ENCODE measurements at regions of chr4 and their contacts with region 1.

Region 1: GRCh38 chr4:110510955-110511544 is 35.1 kb downstream of the ENPEP start:
- DNase-seq: no peak
- ATAC-seq: peak in 3 of 4 donors; percentile 52 to 71 (median 59)
- H3K4me3 ChIP-seq: no peak overlapping the region
- H3K27ac ChIP-seq: no peak overlapping the region
- H3K4me1 ChIP-seq: peaks cover 0 to 11% (median 0%) of the 10 kb centered on the region in 12 donors
- H3K27me3 ChIP-seq: no peaks in the 10 kb centered on the region
- CTCF ChIP-seq: peak; percentile 65 to 80 (median 74)
- POLR2A ChIP-seq: no peak

Region 2: DNA sequence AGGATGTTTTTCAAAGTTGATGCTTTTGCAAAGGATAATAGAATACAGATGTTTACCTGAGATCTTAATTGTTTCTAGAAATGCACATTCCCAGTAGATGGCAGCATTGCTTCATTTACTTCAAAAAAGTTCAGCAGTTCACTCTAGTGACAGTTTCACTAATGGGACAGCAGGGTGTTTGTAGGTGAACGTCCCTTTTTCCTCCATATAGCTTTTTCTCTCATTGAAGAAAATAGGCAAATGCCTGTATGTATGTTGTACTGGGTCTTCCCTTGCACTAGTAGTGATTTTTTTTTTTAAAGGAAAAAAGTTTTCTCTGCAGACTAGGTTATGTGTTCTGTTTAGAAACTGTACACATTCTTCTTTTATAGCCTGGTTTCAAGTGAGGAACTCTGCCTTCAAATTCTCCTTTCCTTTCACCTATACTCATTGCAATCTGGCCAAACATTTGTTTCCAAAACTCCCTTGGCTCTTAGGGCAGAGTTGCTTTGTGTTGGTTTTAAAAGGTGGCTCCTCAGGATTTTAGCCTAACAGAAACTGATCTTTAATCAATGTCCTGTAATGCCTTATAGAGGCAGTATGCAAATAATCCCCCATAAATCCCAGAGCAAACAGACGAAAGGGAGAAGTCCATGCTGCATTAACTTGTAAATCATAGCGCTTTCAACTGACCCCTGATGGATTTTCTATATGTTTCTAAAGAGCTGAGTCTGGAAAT is 512.0 kb before region 1 on chr4:
- intact Hi-C with region 1: loop called in 9 of 10 experiments (anchors 2 to 5 kb)
- DNase-seq: peak in 1 of 5 donors; percentile 18
- ATAC-seq: peak in 3 of 4 donors; percentile 32 to 62 (median 36)
- H3K4me3 ChIP-seq: no peak overlapping the region
- H3K27ac ChIP-seq: no peak overlapping the region
- H3K4me1 ChIP-seq: peaks cover 0 to 8% (median 0%) of the 10 kb centered on the region in 12 donors
- H3K27me3 ChIP-seq: peaks cover 0 to 10% (median 0%) of the 10 kb centered on the region in 9 donors
- CTCF ChIP-seq: peak; percentile 50 to 73 (median 64)
- POLR2A ChIP-seq: no peak

Region 3: GRCh38 chr4:110005461-110006056 is 505.5 kb before region 1 on chr4:
- intact Hi-C with region 1: loop called in 7 of 10 experiments (anchors 1 to 5 kb)
- DNase-seq: no peak
- ATAC-seq: peak in 1 of 4 donors; percentile 61
- H3K4me3 ChIP-seq: no peak overlapping the region
- H3K27ac ChIP-seq: no peak overlapping the region
- H3K4me1 ChIP-seq: peaks cover 0 to 6% (median 0%) of the 10 kb centered on the region in 12 donors
- H3K27me3 ChIP-seq: peaks cover 0 to 5% (median 0%) of the 10 kb centered on the region in 9 donors
- CTCF ChIP-seq: peak; percentile 45 to 77 (median 62)
- POLR2A ChIP-seq: no peak

Region 4: GRCh38 chr4:110049951-110050925 is 460.8 kb before region 1 on chr4:
- intact Hi-C with region 1: loop called in 5 of 10 experiments (anchors 5 kb)
- DNase-seq: peak in 1 of 5 donors; percentile 24
- ATAC-seq: peak in 1 of 4 donors; percentile 30
- H3K4me3 ChIP-seq: no peak overlapping the region
- H3K27ac ChIP-seq: no peak overlapping the region
- H3K4me1 ChIP-seq: no peaks in the 10 kb centered on the region
- H3K27me3 ChIP-seq: no peaks in the 10 kb centered on the region
- CTCF ChIP-seq: peak; percentile 55 to 84 (median 76)
- POLR2A ChIP-seq: no peak

Region 5: DNA sequence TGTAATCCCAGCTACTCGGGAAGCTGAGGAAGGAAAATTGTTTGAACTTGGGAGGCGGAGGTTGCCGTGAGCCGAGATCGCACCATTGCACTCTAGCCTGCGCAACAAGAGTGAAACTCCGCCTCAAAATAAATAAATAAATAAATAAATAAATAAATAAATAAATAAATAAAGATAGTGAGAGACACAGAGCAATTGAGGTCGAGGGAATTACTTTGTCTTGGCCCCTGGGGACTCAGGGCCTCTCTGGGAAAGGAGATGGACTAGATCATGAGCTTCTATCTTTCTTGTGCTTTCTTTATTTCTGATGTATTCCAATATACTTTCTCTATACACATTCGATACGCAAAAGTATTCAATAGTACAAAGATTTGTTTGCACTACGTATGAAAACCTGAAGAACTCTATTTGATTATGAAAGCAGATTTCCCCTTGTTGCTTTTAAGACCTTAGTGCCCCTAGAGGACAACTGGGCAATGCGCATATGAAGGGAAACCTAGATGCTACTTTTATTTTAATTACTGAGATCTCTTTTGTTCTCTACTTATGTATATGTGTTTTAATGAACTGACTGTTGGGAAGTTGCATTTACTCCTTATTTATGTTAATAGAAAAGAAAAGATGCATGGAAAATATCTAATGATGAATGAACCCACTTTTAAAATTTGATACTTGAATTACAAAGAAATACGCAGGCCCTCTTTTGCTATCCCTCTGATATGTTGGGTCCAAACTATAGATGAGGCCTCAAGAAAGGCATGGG is 299.9 kb before region 1 on chr4:
- intact Hi-C with region 1: loop called in 1 of 10 experiments (anchors 10 kb)
- DNase-seq: no peak
- ATAC-seq: peak in 1 of 4 donors; percentile 53
- H3K4me3 ChIP-seq: peak overlapping the region in 2 of 12 donors; percentile 34 to 37
- H3K27ac ChIP-seq: no peak overlapping the region
- H3K4me1 ChIP-seq: no peaks in the 10 kb centered on the region
- H3K27me3 ChIP-seq: no peaks in the 10 kb centered on the region
- CTCF ChIP-seq: peak; percentile 51 to 92 (median 72)
- POLR2A ChIP-seq: no peak

Region 6: DNA sequence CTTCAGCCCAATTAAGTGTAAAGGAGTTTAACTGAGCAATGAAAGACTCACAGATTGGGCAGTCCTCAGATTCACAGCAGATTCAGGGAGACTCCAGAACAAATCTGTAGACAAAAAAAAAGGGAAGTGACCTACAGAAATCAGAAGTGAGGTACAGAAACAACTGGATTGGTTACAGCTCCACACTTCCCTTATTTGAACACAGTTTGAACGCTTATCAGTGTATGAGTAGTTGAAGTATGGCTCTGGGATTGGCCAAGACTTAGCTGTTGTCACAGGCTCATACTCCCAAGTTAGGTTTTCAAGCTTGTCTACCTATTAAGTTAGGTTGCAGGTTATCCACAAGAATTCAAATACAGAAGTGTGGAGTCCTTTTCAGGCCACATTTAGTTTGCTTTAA is 200.3 kb before region 1 on chr4:
- intact Hi-C with region 1: loop called (anchors 1 to 10 kb)
- DNase-seq: no peak
- ATAC-seq: no peak
- H3K4me3 ChIP-seq: no peak overlapping the region
- H3K27ac ChIP-seq: no peak overlapping the region
- H3K4me1 ChIP-seq: peaks cover 0 to 10% (median 0%) of the 10 kb centered on the region in 12 donors
- H3K27me3 ChIP-seq: no peaks in the 10 kb centered on the region
- CTCF ChIP-seq: no peak
- POLR2A ChIP-seq: no peak

Region 7: GRCh38 chr4:110344162-110344561 is 166.9 kb before region 1 on chr4:
- intact Hi-C with region 1: loop called (anchors 1 to 10 kb)
- DNase-seq: no peak
- ATAC-seq: no peak
- H3K4me3 ChIP-seq: no peak overlapping the region
- H3K27ac ChIP-seq: no peak overlapping the region
- H3K4me1 ChIP-seq: no peaks in the 10 kb centered on the region
- H3K27me3 ChIP-seq: no peaks in the 10 kb centered on the region
- CTCF ChIP-seq: peak in 7 of 12 donors; percentile 12 to 36 (median 24)
- POLR2A ChIP-seq: no peak